A549 (cell line): ENCODE measurements at regions of chr12 and their contacts with region 1.

Region 1: DNA sequence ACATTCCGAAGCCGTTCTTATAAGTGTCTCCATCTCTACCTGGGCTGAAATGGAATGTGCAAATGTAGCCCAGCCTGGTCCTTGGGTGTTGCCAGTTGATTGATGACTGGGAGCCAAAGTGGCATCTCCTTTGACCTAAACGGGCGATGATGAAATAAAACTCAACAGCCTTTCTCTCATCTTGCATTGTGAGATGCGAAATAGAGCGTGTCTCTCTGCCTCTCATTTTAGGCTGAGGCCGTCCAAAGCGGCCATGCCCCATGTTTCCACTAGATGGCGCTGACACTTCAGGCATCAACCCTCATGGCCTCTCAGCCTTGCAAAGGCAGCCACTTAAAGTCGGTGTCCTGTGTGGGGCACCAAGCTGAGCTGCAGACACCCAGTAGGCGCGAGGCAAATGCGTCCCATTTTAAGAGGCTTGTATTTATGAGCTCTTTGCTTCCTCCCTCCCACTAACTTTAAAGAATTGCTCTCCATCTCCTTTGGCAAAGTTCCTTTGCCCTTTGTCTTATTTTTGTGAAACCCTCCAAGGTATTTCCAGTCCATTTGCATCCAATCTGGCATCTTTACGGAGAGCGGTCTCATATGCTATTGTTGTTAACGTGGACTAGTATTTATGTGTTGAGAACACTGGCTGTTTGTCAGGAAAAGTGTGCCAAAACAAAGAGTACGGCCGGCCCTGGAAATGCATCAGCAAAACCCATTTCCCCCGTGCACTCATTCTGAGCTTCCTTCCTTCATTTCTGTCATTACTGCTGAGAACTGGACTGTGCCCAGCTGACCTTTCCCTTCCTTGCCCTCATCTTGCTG is 25.0 kb downstream of the GPRC5A start:
- DNase-seq: peak; percentile 66 to 86
- ATAC-seq: peak; percentile 75 to 79
- H3K4me3 ChIP-seq: no peak overlapping the region
- H3K27ac ChIP-seq: peak overlapping the region; percentile 29 to 47; a peak in 4 of 6 replicates
- H3K4me1 ChIP-seq: peaks cover 49% of the 10 kb centered on the region
- CTCF ChIP-seq: peak; percentile 93
- EP300 ChIP-seq: no peak
- POLR2A ChIP-seq: no peak
- RAD21 ChIP-seq: peak; percentile 95 to 96

Region 2: DNA sequence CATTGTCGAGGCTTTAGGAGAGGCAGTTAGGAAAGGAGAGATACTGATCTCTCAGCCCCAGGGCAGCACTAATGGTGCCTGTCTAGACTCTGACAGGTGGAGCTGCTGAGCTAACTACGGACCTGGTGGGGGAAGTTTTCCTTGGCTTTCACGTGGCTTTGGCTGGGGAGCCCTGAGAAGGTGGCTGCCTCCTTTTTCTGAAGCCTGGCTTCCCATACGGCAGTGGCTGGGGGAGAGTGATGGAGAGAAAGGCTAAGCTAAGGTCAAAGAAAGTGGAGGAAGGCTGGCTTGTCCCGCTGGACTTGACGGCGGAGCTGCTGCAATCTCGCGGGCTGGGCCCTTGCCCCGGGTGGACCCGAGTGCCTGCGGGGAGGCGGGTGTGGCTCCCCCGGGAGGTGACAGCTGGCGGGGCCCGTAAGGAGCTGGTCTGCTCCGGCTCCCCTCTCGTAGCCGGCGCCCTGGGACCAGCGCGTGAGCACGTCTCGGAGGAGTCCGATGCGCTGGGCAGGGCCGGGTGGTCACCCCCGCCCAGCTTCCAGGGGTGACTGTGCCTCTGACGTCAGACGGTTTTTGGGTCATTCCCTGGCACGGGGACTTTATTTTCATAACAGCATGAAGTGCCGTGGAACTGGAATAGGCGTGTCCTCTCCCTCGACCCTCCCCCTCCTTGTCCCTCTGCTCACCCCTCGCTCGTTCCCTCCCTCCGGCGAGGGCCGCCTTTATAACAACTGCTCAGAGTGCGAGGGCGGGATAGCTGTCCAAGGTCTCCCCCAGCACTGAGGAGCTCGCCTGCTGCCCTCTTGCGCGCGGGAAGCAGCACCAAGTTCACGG is 25.3 kb before region 1 on chr12 and contains the start of gene GPRC5A:
- CTCF ChIA-PET with region 1: interaction called, 10 read pairs
- POLR2A ChIA-PET with region 1: no interaction called
- DNase-seq: peak; percentile 90 to 99
- ATAC-seq: peak; percentile 87 to 89
- H3K4me3 ChIP-seq: peak within 1 kb of the TSS; percentile 54
- H3K27ac ChIP-seq: peak within 1 kb of the TSS; percentile 94
- H3K4me1 ChIP-seq: peaks cover 47% of the 10 kb centered on the region
- CTCF ChIP-seq: peak; percentile 40
- EP300 ChIP-seq: peak; percentile 61 to 79; a peak in 3 of 5 replicates
- POLR2A ChIP-seq: peak; percentile 99
- RAD21 ChIP-seq: peak; percentile 63 to 64
- polyA plus RNA-seq, gene GPRC5A: 296 and 321 TPM in 2 replicates

Region 3: DNA sequence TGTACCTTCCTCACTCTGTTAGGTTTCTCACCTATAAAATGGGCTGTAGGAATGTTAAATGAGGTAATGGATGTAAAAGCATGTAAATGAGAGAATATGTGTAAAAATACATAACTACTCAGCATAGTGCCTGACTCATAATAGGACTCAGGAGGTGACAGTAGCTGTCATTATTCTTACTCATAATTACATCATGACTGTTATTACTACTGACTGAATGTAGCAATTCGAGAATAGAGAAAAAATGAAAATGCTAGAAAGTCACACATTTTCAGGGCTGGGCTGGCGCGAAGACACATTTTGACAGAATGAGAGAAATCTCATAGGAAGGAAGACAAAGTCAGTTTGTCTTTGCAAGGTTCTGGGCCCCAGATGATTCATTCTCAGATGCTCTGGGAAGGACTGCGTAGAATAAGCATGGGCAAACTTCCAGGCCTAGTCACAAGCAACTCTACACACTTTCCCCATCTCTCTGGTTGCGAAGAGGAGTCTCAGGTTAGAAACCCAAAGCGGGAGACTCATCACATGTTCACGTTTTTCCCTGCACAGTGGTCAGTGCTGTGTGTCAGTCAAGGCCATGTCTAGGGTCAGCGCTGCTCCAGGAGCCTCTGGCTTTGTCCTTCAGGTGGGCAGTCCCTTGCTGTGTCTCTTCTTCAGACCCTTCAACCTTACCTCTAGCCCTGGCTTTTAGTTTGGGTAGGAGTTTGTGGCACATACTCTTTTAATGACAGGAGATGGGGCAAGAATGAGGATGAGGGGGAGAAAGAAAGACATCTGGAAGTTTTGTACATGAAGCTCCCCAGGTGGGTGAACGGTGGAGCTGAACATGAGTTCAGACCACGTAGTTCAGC is 16.6 kb before region 1 on chr12:
- CTCF ChIA-PET with region 1: interaction called, 51 read pairs
- POLR2A ChIA-PET with region 1: no interaction called
- DNase-seq: peak in 1 of 2 experiments; percentile 76
- ATAC-seq: peak; percentile 33 to 64
- H3K4me3 ChIP-seq: 0 out of 3 replicates have a peak overlapping the region, but pooled peaks have one; percentile 0
- H3K27ac ChIP-seq: peak overlapping the region; percentile 84 to 85
- H3K4me1 ChIP-seq: peaks cover 98% of the 10 kb centered on the region
- CTCF ChIP-seq: no peak
- EP300 ChIP-seq: no peak
- POLR2A ChIP-seq: no peak
- RAD21 ChIP-seq: no peak

Region 4: GRCh38 chr12:12927211-12928079 is 11.1 kb after region 1 on chr12:
- CTCF ChIA-PET with region 1: interaction called, 20 read pairs
- POLR2A ChIA-PET with region 1: no interaction called
- DNase-seq: peak; percentile 93 to 96
- ATAC-seq: peak; percentile 75 to 81
- H3K4me3 ChIP-seq: peak overlapping the region; percentile 74
- H3K27ac ChIP-seq: peak overlapping the region; percentile 86 to 94
- H3K4me1 ChIP-seq: peaks cover 25% of the 10 kb centered on the region
- CTCF ChIP-seq: no peak
- EP300 ChIP-seq: no peak
- POLR2A ChIP-seq: peak; percentile 72
- RAD21 ChIP-seq: no peak

Region 5: DNA sequence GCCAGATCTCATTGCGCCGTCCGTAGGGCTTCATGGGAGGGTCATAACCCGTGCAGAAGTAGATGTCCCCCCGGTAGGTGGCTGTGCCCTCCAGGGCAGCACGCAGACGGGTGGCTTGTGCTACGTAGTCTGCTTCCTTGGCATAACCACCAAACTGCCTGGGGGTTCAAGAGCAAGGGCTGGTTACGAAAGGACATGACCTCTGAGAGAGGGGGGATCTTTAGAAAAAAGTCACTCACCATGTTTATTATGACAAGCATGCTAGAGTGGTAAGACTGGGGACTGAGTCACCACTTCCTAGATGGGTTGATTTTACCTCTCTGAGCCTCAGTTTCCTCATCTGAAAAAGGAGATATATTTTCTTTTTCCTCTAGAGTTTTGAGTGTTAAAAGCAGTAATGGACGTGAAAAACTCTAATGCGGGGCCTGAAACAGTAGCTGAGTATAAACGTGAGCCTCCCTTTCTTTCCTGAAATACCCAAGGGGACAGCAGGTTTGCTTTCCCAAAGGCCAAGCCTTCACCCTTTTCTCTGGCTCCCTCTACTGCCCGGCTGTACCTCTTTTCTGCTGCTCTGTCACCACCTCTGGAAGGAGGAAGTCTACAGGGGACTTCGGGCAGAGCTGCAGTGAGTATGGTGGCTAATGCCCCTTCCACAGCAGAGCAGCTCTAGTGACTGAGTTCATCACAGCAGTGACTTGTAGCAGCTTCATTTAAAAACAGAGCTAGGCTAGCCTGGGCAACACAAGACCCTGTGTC is 59.2 kb after region 1 on chr12:
- CTCF ChIA-PET with region 1: interaction called, 180 read pairs
- POLR2A ChIA-PET with region 1: interaction called, 9 read pairs
- DNase-seq: peak; percentile 61 to 64
- ATAC-seq: peak; percentile 36 to 71; a peak in 3 of 6 replicates
- H3K4me3 ChIP-seq: no peak overlapping the region
- H3K27ac ChIP-seq: peak overlapping the region; percentile 63 to 71
- H3K4me1 ChIP-seq: peaks cover 48% of the 10 kb centered on the region
- CTCF ChIP-seq: peak; percentile 42
- EP300 ChIP-seq: no peak
- POLR2A ChIP-seq: no peak
- RAD21 ChIP-seq: peak; percentile 49 to 80; a peak in 4 of 5 replicates

Region 6: GRCh38 chr12:12983420-12984035 is 67.2 kb after region 1 on chr12:
- CTCF ChIA-PET with region 1: interaction called, 180 read pairs
- POLR2A ChIA-PET with region 1: no interaction called
- DNase-seq: peak; percentile 61 to 73
- ATAC-seq: peak; percentile 65 to 66; a peak in 5 of 6 replicates
- H3K4me3 ChIP-seq: no peak overlapping the region
- H3K27ac ChIP-seq: no peak overlapping the region
- H3K4me1 ChIP-seq: peaks cover 30% of the 10 kb centered on the region
- CTCF ChIP-seq: peak; percentile 86
- EP300 ChIP-seq: no peak
- POLR2A ChIP-seq: no peak
- RAD21 ChIP-seq: peak; percentile 84 to 91

Region 7: DNA sequence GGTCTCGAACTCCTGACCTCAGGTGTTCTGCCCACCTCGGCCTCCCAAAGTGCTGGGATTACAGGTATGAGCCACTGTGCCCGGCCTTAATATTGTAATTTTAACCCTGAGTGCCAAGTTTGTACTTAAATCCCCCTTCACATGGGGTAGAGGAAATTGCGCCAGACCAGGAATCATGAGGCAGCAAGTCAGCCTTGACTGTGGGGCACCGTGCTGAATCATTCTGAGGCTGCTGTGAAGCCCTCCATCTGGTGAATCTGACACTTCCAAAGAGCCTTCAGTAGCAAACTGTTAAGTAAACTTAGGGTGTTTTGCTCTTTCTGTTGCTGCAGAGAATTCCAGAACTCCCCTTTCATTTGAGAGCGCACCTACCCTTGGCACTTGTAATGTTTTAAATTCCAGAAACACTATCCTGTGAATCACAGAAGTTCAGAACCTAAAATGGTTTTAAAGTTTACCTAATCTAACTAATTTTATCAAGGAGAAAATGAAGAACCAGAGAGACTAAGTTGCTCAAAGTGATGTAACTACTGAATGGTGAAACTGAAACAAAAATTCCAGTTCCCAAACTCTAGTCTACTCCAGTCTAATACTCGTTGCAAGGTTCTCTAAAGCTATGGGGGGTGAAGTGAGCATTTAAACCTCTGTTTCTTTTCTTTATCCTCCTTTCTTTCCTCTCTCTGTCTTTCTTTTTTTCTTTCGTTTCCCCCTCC is 76.2 kb after region 1 on chr12:
- CTCF ChIA-PET with region 1: interaction called, 180 read pairs
- POLR2A ChIA-PET with region 1: no interaction called
- DNase-seq: peak; percentile 24 to 75
- ATAC-seq: peak; percentile 87 to 88
- H3K4me3 ChIP-seq: peak overlapping the region; percentile 8; the same call in 1 of the 3 replicates
- H3K27ac ChIP-seq: peak overlapping the region; percentile 68 to 86
- H3K4me1 ChIP-seq: peaks cover 24% of the 10 kb centered on the region
- CTCF ChIP-seq: no peak
- EP300 ChIP-seq: peak in 1 of 2 experiments; percentile 25; a peak in 1 of 5 replicates
- POLR2A ChIP-seq: no peak
- RAD21 ChIP-seq: no peak